Ovary (tissue), 10 donors: ENCODE measurements at regions of chr14 and their contacts with region 1.

Region 1: DNA sequence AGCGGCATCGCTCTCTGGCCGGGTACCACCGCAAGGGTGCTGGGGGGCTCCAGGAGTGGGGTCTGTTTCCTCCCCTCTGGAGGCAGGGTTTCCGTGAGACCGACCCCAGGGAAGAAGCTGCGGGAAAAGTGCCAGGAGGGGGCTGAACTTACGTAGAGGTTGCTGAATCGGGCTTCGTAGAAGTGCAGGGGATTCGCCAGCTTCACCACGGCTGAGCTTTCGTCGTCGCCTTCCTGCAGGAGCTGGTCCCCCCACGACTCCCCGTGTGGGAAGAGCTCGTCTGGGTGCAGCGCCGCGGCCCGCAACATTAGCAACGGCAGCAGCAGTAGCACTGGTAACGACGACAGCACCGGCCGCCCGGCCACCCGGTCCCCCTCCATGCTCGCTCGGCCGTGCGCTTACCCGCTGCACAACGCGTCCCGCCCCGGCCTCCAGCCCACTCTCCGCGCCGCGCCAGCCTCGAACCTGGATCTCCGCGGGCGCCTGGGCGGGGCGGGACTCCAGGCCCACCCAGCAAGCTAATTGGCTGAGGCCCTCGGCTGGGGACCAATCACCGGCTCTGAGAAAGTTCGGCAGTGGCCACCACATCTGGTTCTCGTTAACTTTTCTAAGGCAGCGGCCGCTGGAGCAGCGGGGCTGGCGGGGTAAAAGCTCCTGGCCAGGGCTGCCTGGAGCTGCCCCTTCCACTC is at the start of gene NID2:
- DNase-seq: peak; percentile 92 to 94 (median 92)
- H3K4me3 ChIP-seq: peak within 1 kb of the TSS; percentile 73
- H3K27ac ChIP-seq: peak within 1 kb of the TSS; percentile 81 to 88
- H3K4me1 ChIP-seq: peaks cover 4% of the 10 kb centered on the region
- H3K27me3 ChIP-seq: no peaks in the 10 kb centered on the region
- CTCF ChIP-seq: peak in 1 of 3 donors; percentile 6
- EP300 ChIP-seq: no peak
- POLR2A ChIP-seq: peak; percentile 69
- total RNA-seq, gene NID2: 31.5 to 55.8 (median 42.7) TPM

Region 2: GRCh38 chr14:51834240-51834639 is 234.5 kb before region 1 on chr14:
- intact Hi-C with region 1: no loop called
- DNase-seq: no peak
- H3K4me3 ChIP-seq: no peak overlapping the region
- H3K27ac ChIP-seq: no peak overlapping the region
- H3K4me1 ChIP-seq: no peaks in the 10 kb centered on the region
- H3K27me3 ChIP-seq: no peaks in the 10 kb centered on the region
- CTCF ChIP-seq: no peak
- EP300 ChIP-seq: no peak
- POLR2A ChIP-seq: no peak

Region 3: DNA sequence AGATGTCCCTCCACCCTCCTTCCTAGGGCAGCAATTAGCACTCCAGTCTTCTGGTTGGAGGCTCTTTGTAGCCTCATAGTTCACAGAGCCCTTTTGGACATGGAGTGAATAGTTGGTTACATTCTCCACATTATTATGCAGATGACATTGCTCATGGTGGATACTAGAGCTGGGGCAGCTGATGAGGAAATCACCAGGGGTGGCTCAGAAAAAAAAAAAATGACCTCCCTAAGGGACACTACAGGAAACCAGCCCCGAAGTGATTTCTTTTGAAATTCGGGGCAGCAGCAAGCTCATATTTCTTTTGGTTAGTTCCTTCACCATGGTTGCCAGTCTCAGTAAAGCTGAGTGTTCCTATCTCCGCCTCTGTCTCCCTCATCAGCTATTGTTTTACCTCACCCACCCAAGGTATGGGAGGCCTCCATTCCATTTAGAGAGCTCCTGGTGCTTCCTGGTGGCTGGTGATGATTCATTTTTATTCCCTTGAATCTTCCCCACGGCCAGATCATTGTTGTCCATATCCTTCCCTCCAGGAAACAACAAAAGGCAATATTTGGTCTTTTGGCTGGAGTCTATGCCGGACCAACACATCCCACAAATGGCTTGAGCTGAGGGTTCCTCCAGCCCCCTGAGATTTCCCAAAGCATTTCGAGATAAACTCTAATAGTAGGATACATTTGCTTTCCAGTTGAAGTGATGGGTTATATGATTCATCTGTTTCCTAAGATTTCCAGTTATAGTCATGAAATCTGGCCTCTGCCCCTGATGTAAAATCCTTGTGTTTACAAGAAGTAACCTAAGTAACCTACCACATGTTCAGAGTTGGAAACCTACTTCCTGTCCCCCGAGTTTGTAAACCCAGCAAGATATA is 56.3 kb after region 1 on chr14:
- intact Hi-C with region 1: loop called in 2 of 4 experiments (anchors 10 kb)
- DNase-seq: no peak
- H3K4me3 ChIP-seq: no peak overlapping the region
- H3K27ac ChIP-seq: no peak overlapping the region
- H3K4me1 ChIP-seq: peaks cover 2% of the 10 kb centered on the region
- H3K27me3 ChIP-seq: no peaks in the 10 kb centered on the region
- CTCF ChIP-seq: no peak
- EP300 ChIP-seq: no peak
- POLR2A ChIP-seq: no peak